Sigmoid colon (tissue), 7 donors: ENCODE measurements at regions of chr3 and their contacts with region 1.

Region 1: GRCh38 chr3:42749753-42750231 is 23.3 kb downstream of the CCDC13 start:
- DNase-seq: no peak
- H3K4me3 ChIP-seq: no peak overlapping the region
- H3K27ac ChIP-seq: peak overlapping the region; percentile 80 to 90 (median 84)
- H3K4me1 ChIP-seq: peaks cover 0 to 68% (median 60%) of the 10 kb centered on the region in 4 donors
- H3K27me3 ChIP-seq: no peaks in the 10 kb centered on the region
- CTCF ChIP-seq: peak in 3 of 4 experiments; percentile 12 to 51 (median 42)
- EP300 ChIP-seq: no peak
- POLR2A ChIP-seq: no peak

Region 2: GRCh38 chr3:42581709-42582473 is 167.9 kb before region 1 on chr3 and contains the start of gene SEC22C:
- intact Hi-C with region 1: loop called (anchors 5 kb)
- DNase-seq: peak; percentile 98
- H3K4me3 ChIP-seq: peak within 1 kb of the TSS; percentile 56 to 97 (median 86)
- H3K27ac ChIP-seq: peak within 1 kb of the TSS; percentile 87 to 93 (median 90)
- H3K4me1 ChIP-seq: peaks cover 0 to 26% (median 20%) of the 10 kb centered on the region in 4 donors
- H3K27me3 ChIP-seq: no peaks in the 10 kb centered on the region
- CTCF ChIP-seq: no peak
- EP300 ChIP-seq: no peak
- POLR2A ChIP-seq: peak; percentile 58 to 67
- total RNA-seq, gene SEC22C: 48.5 to 89.2 (median 57.2) TPM

Region 3: GRCh38 chr3:42600111-42600988 is 149.4 kb before region 1 on chr3 and contains the start of gene NKTR:
- intact Hi-C with region 1: loop called (anchors 2 kb)
- DNase-seq: peak; percentile 98
- H3K4me3 ChIP-seq: peak within 1 kb of the TSS; percentile 70 to 89 (median 86)
- H3K27ac ChIP-seq: peak within 1 kb of the TSS; percentile 94 to 98 (median 96)
- H3K4me1 ChIP-seq: peaks cover 0 to 27% (median 24%) of the 10 kb centered on the region in 4 donors
- H3K27me3 ChIP-seq: no peaks in the 10 kb centered on the region
- CTCF ChIP-seq: no peak
- EP300 ChIP-seq: no peak
- POLR2A ChIP-seq: peak; percentile 84 to 89
- total RNA-seq, gene NKTR: 81.3 to 130 (median 84.4) TPM

Region 4: GRCh38 chr3:42652611-42653302 is 97.0 kb before region 1 on chr3:
- intact Hi-C with region 1: loop called (anchors 1 kb)
- DNase-seq: peak; percentile 85
- H3K4me3 ChIP-seq: peak overlapping the region; percentile 74 to 96 (median 85)
- H3K27ac ChIP-seq: peak overlapping the region; percentile 93 to 98 (median 96)
- H3K4me1 ChIP-seq: peaks cover 0 to 78% (median 64%) of the 10 kb centered on the region in 4 donors
- H3K27me3 ChIP-seq: no peaks in the 10 kb centered on the region
- CTCF ChIP-seq: no peak
- EP300 ChIP-seq: no peak
- POLR2A ChIP-seq: peak; percentile 63 to 68

Region 5: GRCh38 chr3:42667523-42668412 is 82.0 kb before region 1 on chr3:
- intact Hi-C with region 1: no loop called
- DNase-seq: peak; percentile 64
- H3K4me3 ChIP-seq: no peak overlapping the region
- H3K27ac ChIP-seq: no peak overlapping the region
- H3K4me1 ChIP-seq: peaks cover 0 to 31% (median 29%) of the 10 kb centered on the region in 4 donors
- H3K27me3 ChIP-seq: no peaks in the 10 kb centered on the region
- CTCF ChIP-seq: no peak
- EP300 ChIP-seq: no peak
- POLR2A ChIP-seq: no peak